ENCODE measurements at regions of chr1 and their contacts with region 1.

Region 1: GRCh38 chr1:114346480-114347029 is 164.4 kb downstream of the TRIM33 start:
- DNase-seq: peak; percentile 99
- H3K4me3 Mint-ChIP-seq: peak overlapping the region; percentile 78
- H3K27ac Mint-ChIP-seq: peak overlapping the region; percentile 94
- H3K4me1 Mint-ChIP-seq: peaks cover 48% of the 10 kb centered on the region
- H3K27me3 Mint-ChIP-seq: no peaks in the 10 kb centered on the region

Region 2: DNA sequence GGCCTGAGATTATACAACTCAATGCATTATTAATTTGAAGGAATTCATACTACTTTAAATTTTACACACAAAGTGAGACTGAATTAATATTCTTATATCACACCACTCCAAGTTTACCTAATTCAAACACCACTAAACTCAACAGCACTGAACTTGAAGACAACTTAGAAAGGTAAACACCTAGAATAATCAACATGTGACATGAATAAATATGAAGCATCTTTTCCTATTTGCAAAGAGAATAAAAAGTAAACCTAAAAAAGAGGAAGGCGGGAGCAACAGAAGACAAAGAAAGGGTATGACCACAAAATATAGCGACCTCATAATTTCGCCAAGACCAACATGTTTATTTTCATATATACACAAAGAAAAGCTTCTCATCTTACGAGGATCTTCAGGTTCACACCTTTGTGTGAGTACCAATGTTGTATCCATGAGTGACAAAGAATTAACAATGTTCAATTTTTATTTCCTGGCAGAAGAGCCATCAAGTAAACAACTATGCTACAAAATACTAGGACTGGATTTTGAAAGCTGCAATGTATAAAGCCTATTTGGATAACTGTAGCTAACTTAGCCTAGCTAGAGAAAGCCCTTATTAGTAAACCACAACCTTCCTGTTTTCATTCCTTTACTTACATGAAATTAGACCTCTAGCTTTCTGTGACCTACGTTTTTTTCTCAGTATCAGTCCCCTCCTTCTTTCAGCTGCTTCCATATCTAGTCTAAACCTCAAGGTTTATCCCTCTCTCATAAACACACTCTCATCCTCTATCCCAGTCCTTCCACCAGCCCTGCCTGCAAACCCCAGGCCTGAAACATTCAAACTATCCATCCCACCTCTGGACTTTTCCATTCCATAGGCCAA is 566.0 kb before region 1 on chr1:
- CTCF ChIA-PET with region 1: no interaction called
- POLR2A ChIA-PET with region 1: no interaction called
- DNase-seq: no peak
- H3K4me3 Mint-ChIP-seq: no peak overlapping the region
- H3K27ac Mint-ChIP-seq: no peak overlapping the region
- H3K4me1 Mint-ChIP-seq: peaks cover 16% of the 10 kb centered on the region
- H3K27me3 Mint-ChIP-seq: no peaks in the 10 kb centered on the region

Region 3: DNA sequence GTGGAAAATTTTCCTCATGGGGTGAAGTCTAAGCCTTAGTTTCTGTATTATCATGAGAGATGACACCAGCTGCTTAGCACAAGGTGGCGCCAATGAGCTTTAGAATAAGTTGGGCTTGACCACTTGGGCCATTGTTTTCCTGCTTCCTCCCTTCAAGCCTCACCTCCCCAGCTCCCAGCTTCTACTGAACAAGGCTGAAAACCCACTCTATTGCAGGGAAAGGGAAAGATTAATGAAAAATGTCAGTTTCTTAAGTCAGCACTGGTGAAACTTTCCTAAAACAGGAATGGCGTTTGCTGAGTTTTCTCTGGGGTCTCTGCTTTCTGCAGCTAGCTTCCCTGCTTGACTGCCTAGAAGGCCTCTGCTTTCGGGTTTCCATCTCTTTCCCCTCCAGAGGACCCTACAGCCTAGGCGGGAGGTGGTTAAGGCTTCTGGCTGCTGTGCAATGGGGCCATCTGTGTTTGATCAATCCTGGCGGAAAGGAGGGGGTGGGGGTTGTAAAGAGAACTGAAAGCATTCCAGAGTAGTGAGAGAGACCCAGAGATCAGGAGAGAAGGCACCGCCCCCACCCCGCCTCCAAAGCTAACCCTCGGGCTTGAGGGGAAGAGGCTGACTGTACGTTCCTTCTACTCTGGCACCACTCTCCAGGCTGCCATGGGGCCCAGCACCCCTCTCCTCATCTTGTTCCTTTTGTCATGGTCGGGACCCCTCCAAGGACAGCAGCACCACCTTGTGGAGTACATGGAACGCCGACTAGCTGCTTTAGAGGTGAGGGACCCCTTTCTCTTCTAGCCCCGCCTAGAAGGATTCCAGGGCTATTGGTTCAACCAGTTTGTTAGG is 367.5 kb before region 1 on chr1 and contains the start of gene OLFML3:
- CTCF ChIA-PET with region 1: interaction called, 10 read pairs
- POLR2A ChIA-PET with region 1: no interaction called
- DNase-seq: peak; percentile 62
- H3K4me3 Mint-ChIP-seq: no peak within 1 kb of the TSS
- H3K27ac Mint-ChIP-seq: peak within 1 kb of the TSS; percentile 9
- H3K4me1 Mint-ChIP-seq: peaks cover 42% of the 10 kb centered on the region
- H3K27me3 Mint-ChIP-seq: no peaks in the 10 kb centered on the region
- total RNA-seq, gene OLFML3: 0.20 to 0.45 TPM

Region 4: DNA sequence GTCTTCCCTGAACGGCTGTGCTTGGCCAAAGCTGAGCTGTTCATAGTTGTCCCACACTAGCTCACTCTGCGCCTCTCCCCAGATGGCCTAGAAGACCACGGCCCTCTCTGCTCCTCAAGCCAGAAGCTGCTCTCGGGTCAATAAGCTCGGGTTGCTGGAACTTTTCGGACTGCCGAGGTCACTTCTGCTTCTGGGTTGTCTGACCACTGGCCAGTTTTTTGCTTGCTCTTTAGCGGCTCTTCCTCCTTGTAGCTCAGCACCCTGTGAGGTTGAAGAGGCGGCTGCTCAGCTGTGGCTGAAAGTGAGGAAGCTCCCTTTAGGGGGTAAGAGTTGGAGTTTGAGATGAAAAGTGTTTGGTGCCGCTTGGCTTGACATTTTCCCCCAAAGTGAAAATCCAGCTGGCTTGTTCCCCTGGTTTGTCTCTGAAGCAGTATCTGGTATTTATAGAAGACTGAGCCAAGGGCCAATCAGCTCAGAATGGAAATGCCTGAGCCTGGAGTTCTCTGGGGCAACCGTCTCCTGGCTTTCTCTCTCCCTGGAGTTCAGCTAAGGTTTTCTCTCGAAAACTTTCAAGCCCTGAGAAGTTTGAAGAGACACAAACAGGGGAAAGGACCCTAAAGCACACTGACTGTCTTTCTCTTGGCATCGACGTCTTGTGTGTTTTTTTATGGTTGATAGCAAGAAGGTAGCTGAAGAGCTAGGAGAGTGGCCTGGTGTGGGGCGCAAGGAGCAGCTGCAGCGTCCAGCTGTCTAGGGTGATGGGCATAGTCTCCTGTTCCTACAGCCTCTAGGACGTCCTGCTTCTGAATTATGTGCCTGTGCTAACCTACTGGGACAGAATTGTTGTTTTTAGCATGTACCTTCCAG is 264.9 kb before region 1 on chr1:
- CTCF ChIA-PET with region 1: no interaction called
- POLR2A ChIA-PET with region 1: no interaction called
- DNase-seq: no peak
- H3K4me3 Mint-ChIP-seq: no peak overlapping the region
- H3K27ac Mint-ChIP-seq: no peak overlapping the region
- H3K4me1 Mint-ChIP-seq: peaks cover 1% of the 10 kb centered on the region
- H3K27me3 Mint-ChIP-seq: peaks cover 11% of the 10 kb centered on the region

Region 5: GRCh38 chr1:114207635-114208034 is 138.9 kb before region 1 on chr1:
- CTCF ChIA-PET with region 1: no interaction called
- POLR2A ChIA-PET with region 1: no interaction called
- DNase-seq: no peak
- H3K4me3 Mint-ChIP-seq: no peak overlapping the region
- H3K27ac Mint-ChIP-seq: no peak overlapping the region
- H3K4me1 Mint-ChIP-seq: no peaks in the 10 kb centered on the region
- H3K27me3 Mint-ChIP-seq: peaks cover 37% of the 10 kb centered on the region

Region 6: DNA sequence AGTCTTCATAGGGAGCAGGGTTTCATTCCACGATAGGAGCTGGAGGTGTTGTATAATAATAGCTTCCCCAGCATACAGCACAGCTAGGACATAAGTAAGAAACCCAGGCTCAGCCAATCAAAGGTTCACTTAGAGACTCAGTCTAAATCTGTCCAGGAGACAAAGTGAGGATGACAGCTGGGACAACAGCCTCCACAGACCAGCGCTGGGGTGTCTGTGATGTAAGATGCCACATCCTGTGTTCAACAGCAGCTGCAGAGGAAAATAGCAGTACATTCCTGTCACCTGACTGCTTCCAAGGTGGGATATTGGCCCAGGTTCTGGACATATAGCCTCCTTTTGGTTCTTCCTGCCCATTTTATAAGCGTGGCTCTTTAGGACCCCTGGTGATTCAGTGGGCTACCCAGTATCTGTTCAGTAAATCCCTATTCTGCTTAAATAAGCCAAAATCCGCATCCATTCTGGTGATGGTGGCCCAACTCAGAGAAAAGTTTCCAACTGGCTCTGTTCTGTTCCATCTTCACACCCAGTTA is 16.0 kb before region 1 on chr1:
- CTCF ChIA-PET with region 1: interaction called, 32 read pairs
- POLR2A ChIA-PET with region 1: interaction called, 23 read pairs
- DNase-seq: peak; percentile 62
- H3K4me3 Mint-ChIP-seq: no peak overlapping the region
- H3K27ac Mint-ChIP-seq: no peak overlapping the region
- H3K4me1 Mint-ChIP-seq: peaks cover 63% of the 10 kb centered on the region
- H3K27me3 Mint-ChIP-seq: peaks cover 9% of the 10 kb centered on the region

Region 7: DNA sequence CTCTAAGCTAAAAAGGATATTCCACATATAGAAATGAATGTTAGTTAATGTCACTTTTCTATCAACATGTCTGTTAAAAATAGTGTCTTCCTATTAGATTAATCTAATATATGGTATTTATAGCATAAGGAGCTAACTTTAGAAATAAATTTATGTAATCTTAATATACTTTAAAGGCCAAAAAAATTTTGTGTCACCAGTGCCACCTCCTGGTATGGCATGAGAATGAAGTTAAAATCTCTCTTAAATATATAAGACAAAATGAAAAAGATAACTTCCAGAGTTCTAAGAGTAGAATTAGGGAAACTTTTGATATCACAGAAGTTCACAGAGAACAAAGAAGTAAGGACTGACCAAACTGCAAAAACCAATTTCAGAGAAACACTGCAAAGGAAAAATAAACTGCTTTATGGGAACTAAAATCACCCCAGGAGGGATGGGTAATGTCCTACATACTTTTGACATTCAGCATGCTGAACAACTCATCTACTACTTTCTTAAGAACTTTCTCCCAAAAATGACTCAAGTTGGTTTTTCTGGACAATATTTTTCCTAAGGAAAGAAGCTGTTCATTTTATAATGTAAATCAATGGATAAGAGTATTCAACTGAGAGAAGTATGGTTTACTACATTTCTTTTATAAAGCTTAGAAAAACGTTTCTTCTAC is 81.7 kb after region 1 on chr1:
- CTCF ChIA-PET with region 1: interaction called, 33 read pairs
- POLR2A ChIA-PET with region 1: no interaction called
- DNase-seq: peak; percentile 18
- H3K4me3 Mint-ChIP-seq: no peak overlapping the region
- H3K27ac Mint-ChIP-seq: no peak overlapping the region
- H3K4me1 Mint-ChIP-seq: peaks cover 8% of the 10 kb centered on the region
- H3K27me3 Mint-ChIP-seq: no peaks in the 10 kb centered on the region

Region 8: GRCh38 chr1:114670083-114671010 is 323.8 kb after region 1 on chr1:
- CTCF ChIA-PET with region 1: interaction called, 19 read pairs
- POLR2A ChIA-PET with region 1: interaction called, 4 read pairs
- DNase-seq: peak; percentile 88
- H3K4me3 Mint-ChIP-seq: peak overlapping the region; percentile 91
- H3K27ac Mint-ChIP-seq: peak overlapping the region; percentile 49
- H3K4me1 Mint-ChIP-seq: peaks cover 10% of the 10 kb centered on the region
- H3K27me3 Mint-ChIP-seq: peaks cover 23% of the 10 kb centered on the region

Measured in activated CD4-positive, alpha-beta memory T cell treated with anti-CD3 and anti-CD28 coated beads, Interleukin-2, amount 10 ng/mL, durations not matched to agents 7 days and 5 days (primary cell).